Activated CD4-positive, alpha-beta memory T cell treated with anti-CD3 and anti-CD28 coated beads, Interleukin-2, amount 10 ng/mL, durations not matched to agents 7 days and 5 days (primary cell): ENCODE measurements at regions of chr22 and their contacts with region 1.

Region 1: GRCh38 chr22:41910050-41911000 is 4.5 kb downstream of the SHISA8 start:
- DNase-seq: peak; percentile 35
- H3K4me3 Mint-ChIP-seq: no peak overlapping the region
- H3K27ac Mint-ChIP-seq: no peak overlapping the region
- H3K4me1 Mint-ChIP-seq: peaks cover 37% of the 10 kb centered on the region
- H3K27me3 Mint-ChIP-seq: peaks cover 38% of the 10 kb centered on the region

Region 2: DNA sequence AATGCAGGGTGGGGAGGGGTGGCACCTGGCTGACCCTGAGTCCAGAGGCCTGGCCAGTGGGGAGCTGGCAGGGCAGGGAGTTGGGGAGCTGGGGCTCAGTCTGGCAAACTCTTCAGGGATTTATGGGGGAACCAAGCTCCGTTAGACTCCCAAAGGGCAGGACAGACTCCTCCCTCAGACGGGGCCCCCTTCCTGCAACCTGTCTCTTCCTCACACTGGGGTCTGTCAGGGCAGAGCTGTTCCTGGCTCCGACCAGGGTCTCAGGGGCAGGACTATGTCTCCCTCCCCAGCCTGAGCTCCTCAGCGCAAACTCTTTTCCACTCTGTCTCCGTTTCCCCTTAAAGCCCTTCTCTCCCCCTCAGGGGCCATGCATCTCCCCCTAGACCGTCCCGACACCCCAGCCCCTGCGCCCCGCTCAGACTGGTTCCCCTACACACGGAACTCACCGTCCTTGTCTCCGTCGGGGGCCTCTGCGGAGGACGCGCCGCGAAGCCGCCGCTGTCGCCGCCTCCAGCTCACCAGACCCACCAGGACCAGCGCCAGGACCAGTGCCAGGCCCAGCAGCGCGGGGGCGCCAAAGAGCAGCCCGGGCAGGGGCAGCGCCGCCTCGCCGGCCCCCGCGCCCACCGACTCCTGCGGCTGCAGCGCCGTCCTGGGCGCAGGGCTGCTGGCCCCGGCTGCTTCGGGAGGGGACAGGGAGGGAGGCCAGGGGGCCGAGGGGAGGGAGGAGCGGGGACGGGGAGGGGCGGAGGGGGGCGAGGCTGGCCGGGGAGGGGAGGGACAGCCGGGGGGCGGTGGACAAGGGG is 15.5 kb after region 1 on chr22:
- CTCF ChIA-PET with region 1: interaction called, 12 read pairs
- POLR2A ChIA-PET with region 1: interaction called, 13 read pairs
- DNase-seq: peak; percentile 77
- H3K4me3 Mint-ChIP-seq: peak overlapping the region; percentile 60
- H3K27ac Mint-ChIP-seq: no peak overlapping the region
- H3K4me1 Mint-ChIP-seq: peaks cover 7% of the 10 kb centered on the region
- H3K27me3 Mint-ChIP-seq: peaks cover 26% of the 10 kb centered on the region

Region 3: GRCh38 chr22:42114721-42115120 is 204.4 kb after region 1 on chr22:
- CTCF ChIA-PET with region 1: no interaction called
- POLR2A ChIA-PET with region 1: no interaction called
- DNase-seq: no peak
- H3K4me3 Mint-ChIP-seq: no peak overlapping the region
- H3K27ac Mint-ChIP-seq: no peak overlapping the region
- H3K4me1 Mint-ChIP-seq: peaks cover 16% of the 10 kb centered on the region
- H3K27me3 Mint-ChIP-seq: no peaks in the 10 kb centered on the region